Right ventricle myocardium superior (tissue), 1 donor: ENCODE measurements at regions of chr1 and their contacts with region 1.

Region 1: GRCh38 chr1:152869808-152870419 is 8.2 kb upstream of the SMCP start:
- DNase-seq: peak; percentile 48
- ATAC-seq: no peak

Region 2: DNA sequence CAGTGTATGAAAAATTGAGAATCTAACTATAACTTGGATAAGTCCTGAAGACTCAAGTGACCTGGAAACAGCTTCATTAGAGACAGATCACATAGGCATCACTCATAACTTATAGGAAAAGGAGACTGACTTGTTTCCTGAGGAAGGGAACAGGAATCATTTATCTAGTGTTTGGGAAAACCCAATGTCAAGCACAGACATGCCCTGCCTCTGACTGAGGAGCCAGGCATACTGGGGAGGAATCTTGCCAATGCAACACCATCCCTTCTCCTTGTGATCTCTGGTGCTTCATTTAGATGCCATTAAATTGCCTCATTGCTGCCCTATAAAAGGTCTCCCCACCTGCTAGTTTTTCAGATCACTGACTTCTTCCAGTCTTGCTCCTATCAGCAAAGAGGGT is 151.7 kb before region 1 on chr1:
- intact Hi-C with region 1: no loop called
- DNase-seq: no peak
- ATAC-seq: no peak

Region 3: GRCh38 chr1:153220606-153221303 is 350.8 kb after region 1 on chr1:
- intact Hi-C with region 1: loop called (anchors 10 kb)
- DNase-seq: no peak
- ATAC-seq: no peak